ENCODE measurements at regions of chr2 and their contacts with region 1.

Region 1: DNA sequence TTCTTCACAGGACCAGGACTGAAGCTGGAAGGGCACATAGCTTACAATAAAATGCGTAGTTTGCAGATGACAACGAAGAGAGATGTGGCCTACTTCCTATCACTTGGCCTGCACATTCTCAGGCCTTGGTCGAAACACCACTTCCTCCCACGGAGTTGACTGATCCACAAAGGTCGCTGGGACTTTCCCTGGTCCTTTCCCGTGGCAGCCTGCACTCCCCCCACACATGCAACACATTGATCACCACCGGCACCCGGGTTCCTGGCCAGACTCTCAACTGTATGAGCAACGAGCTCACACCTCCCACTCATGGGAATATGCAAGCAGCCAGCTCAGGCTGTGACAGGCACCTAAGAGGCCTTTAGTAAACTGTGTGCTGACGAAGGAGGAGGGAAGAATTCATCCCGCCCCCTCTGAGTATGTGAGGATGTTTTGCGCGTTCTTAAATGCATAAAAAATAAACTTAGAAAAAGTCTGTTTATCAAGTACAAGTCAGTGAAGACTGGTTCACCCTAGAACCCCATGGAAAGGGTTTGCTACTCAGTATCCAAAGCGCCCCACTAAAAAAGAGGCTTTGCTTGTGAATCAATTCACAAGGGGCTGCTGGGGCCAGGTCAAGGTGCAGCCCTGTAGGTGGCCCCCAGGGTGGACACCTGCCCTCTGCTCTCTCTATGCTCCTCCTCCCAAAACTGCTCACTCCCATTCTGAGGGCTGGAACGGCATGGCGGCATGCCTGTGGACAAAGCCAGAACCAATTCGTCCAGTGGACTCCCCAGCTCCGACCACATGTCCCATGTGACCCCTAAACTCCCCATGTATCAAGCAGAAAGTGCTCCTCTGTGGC is 154.3 kb downstream of the EIPR1 start:
- DNase-seq: no peak
- ATAC-seq: peak in 1 of 4 donors; percentile 33
- H3K4me3 ChIP-seq: no peak overlapping the region
- H3K27ac ChIP-seq: peak overlapping the region in 1 of 12 donors; percentile 28
- H3K4me1 ChIP-seq: no peaks in the 10 kb centered on the region
- H3K27me3 ChIP-seq: no peaks in the 10 kb centered on the region
- CTCF ChIP-seq: no peak
- POLR2A ChIP-seq: no peak

Region 2: DNA sequence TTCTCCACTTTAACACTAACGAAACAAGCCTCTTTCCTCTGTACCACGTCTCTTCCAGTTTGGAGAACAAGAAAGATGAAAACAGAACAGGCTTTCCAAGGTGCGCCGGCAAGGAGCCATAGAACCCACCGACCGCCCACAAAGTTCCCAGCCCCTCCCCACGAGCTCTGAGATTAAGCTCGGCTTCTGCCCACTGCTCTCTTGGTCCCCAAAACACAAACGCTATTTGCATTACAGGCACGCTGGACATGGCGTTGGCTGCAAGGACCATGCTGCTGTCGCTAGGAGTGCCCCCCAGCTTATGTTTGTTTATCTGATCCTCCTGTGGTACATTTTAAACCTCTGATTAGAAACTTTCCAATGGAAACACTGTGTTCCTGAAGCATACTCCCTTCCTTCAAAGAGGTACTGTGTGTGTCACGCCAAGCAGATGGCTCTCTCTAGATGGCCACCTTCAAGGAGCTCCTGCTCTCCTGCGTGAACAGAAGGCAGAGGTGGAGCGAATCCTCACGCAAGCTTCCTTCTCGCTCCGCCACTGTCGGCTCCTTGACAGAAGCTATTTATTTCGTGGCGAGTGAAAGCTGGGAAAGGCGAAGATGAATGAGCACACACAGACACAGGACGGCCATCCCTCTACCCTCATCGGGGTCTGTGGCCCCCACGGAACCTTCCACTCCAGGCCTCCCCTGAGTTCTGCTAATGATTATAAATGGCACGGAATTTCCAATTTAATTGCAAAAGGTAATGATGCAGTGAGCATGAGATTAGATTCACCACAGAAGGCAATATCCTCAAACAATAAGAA is 11.8 kb before region 1 on chr2:
- intact Hi-C with region 1: loop called in 1 of 10 experiments (anchors 1 kb)
- DNase-seq: no peak
- ATAC-seq: no peak
- H3K4me3 ChIP-seq: no peak overlapping the region
- H3K27ac ChIP-seq: no peak overlapping the region
- H3K4me1 ChIP-seq: no peaks in the 10 kb centered on the region
- H3K27me3 ChIP-seq: no peaks in the 10 kb centered on the region
- CTCF ChIP-seq: no peak
- POLR2A ChIP-seq: no peak

Region 3: DNA sequence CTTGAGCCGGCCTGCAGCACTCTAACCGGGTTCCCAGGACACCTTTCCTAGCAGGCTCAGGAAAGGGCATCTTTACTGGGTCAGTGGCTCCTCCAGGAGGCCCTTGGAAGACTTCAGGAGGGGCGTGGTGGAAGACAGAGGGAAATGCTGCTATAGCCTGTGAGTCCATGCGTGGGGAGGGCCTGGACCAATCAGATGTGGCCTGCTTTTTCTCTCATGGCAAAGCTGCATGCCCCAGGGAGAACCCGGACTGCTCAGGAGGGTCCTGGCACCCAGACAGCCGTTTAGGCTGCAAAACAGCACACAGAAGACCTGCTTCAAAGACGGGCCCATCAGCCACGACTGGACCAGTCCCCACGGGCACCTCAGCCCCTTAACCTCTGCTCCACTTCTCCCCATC is 69.9 kb after region 1 on chr2:
- intact Hi-C with region 1: no loop called
- DNase-seq: peak in 1 of 5 donors; percentile 42
- ATAC-seq: no peak
- H3K4me3 ChIP-seq: no peak overlapping the region
- H3K27ac ChIP-seq: no peak overlapping the region
- H3K4me1 ChIP-seq: no peaks in the 10 kb centered on the region
- H3K27me3 ChIP-seq: no peaks in the 10 kb centered on the region
- CTCF ChIP-seq: no peak
- POLR2A ChIP-seq: no peak

Region 4: GRCh38 chr2:4695281-4695861 is 1472.1 kb after region 1 on chr2:
- intact Hi-C with region 1: no loop called
- DNase-seq: no peak
- ATAC-seq: no peak
- H3K4me3 ChIP-seq: no peak overlapping the region
- H3K27ac ChIP-seq: no peak overlapping the region
- H3K4me1 ChIP-seq: no peaks in the 10 kb centered on the region
- H3K27me3 ChIP-seq: no peaks in the 10 kb centered on the region
- CTCF ChIP-seq: no peak
- POLR2A ChIP-seq: no peak

Measured in heart left ventricle (tissue), 16 donors.